ENCODE measurements at regions of chr18 and their contacts with region 1.

Region 1: DNA sequence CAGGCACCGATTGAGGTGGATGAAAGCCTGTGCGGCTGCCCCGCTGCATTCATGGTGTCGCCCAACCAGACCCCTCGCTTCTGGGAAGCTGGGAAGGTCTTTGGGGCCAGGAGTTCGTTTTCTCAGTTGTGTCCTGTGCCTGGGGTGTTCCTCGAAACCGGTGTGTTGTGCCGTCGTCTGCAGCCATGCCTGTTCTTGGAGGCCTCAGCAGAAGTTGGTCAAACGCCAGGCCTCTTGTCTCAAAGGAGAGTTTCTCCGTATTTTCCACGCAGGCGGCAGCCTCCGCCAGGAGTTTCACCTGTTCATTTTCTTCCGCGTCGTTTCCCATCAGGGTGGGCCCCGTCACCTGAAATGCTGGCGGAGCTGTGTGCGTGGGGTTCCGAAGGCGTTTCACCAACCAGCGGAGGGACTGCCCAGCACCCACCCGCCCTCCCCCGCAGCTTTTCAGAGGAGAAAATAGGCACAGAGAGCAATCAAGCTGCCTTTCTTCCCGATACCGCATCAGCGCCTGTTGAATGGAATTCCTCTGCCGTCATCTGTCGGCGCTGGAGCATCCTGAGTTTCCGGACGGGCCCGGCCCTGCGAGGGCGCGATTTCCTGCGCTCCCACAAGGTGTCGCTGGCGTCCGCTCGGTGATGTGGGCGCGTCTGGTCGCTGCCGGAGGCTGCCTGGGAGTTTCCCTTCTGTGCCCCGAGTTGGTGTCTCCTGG is 17.0 kb upstream of the NFATC1 start:
- DNase-seq: peak; percentile 87
- ATAC-seq: peak; percentile 95
- H3K4me3 Mint-ChIP-seq: no peak overlapping the region
- H3K27ac Mint-ChIP-seq: no peak overlapping the region
- H3K4me1 Mint-ChIP-seq: peaks cover 8% of the 10 kb centered on the region
- H3K27me3 Mint-ChIP-seq: no peaks in the 10 kb centered on the region
- CTCF ChIP-seq: peak; percentile 92

Region 2: DNA sequence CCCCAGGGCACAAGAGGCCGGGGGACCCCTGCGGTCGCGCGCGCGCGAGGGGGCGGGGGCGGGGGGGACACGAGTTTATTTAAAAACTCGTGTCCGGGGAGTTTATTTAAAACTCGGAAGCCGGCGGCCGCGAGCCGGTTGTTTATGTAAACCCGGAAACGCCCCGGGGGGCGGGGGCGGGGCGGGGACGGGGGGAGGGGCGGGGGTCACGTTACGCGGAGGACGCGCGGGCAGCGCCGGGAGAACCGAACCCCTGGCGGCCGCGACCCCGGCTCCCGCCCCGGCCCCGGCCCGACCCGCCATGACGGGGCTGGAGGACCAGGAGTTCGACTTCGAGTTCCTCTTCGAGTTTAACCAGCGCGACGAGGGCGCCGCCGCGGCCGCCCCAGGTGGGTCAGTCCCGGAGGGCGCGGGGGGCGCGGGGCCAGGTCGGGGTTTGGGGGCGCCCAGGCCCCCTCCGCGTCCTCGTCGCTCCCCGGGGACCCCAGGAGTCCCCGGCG is 21.4 kb after region 1 on chr18:
- CTCF ChIA-PET with region 1: interaction called, 44 read pairs
- POLR2A ChIA-PET with region 1: no interaction called
- intact Hi-C with region 1: no loop called
- DNase-seq: peak; percentile 78
- ATAC-seq: no peak
- H3K4me3 Mint-ChIP-seq: peak overlapping the region; percentile 94
- H3K27ac Mint-ChIP-seq: no peak overlapping the region
- H3K4me1 Mint-ChIP-seq: peaks cover 42% of the 10 kb centered on the region
- H3K27me3 Mint-ChIP-seq: no peaks in the 10 kb centered on the region
- CTCF ChIP-seq: no peak

Region 3: GRCh38 chr18:79523736-79524180 is 145.1 kb after region 1 on chr18:
- CTCF ChIA-PET with region 1: interaction called, 88 read pairs
- POLR2A ChIA-PET with region 1: interaction called, 3 read pairs
- intact Hi-C with region 1: loop called (anchors 2 kb)
- DNase-seq: peak; percentile 96
- ATAC-seq: peak; percentile 50
- H3K4me3 Mint-ChIP-seq: peak overlapping the region; percentile 78
- H3K27ac Mint-ChIP-seq: peak overlapping the region; percentile 100
- H3K4me1 Mint-ChIP-seq: peaks cover 60% of the 10 kb centered on the region
- H3K27me3 Mint-ChIP-seq: no peaks in the 10 kb centered on the region
- CTCF ChIP-seq: no peak

Region 4: DNA sequence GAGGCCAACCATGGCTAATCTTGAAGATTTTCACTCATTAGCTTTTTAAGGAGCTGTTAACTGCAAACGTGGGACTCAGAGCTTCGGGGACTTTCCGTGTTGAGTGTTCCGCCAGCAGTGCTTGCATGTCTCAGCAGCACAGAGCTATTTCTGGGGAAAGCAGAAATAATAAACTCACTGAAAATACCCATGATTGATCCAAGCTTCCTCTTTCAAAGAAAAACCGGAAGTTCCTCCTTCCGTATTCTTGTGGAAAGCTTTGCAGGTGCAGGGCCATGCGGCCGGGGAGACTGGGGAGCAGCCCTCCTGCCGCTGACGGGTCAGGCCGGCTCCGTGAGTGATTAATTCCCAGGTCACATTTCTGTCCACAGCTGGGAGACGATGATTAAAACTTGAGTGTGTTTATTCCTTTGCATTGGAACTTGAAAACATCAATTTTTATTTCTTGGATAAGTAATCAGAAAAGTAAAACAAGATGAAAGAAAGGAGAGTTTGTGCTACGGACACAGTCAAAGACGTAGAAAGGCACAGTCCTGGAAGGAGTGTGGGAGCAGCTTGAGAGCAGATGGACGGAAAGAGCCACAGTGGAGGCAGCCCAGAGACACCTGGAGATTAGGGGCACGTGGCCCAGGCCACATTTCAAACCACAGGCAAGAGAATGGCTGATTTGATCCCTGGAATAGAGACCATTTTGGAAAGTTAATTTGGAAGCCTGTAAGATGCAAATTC is 246.7 kb after region 1 on chr18:
- CTCF ChIA-PET with region 1: interaction called, 18 read pairs
- POLR2A ChIA-PET with region 1: interaction called, 4 read pairs
- intact Hi-C with region 1: no loop called
- DNase-seq: peak; percentile 23
- ATAC-seq: peak; percentile 47
- H3K4me3 Mint-ChIP-seq: no peak overlapping the region
- H3K27ac Mint-ChIP-seq: no peak overlapping the region
- H3K4me1 Mint-ChIP-seq: peaks cover 11% of the 10 kb centered on the region
- H3K27me3 Mint-ChIP-seq: peaks cover 15% of the 10 kb centered on the region
- CTCF ChIP-seq: no peak

Region 5: GRCh38 chr18:79657342-79657985 is 278.8 kb after region 1 on chr18:
- CTCF ChIA-PET with region 1: interaction called, 20 read pairs
- POLR2A ChIA-PET with region 1: no interaction called
- intact Hi-C with region 1: no loop called
- DNase-seq: no peak
- ATAC-seq: no peak
- H3K4me3 Mint-ChIP-seq: no peak overlapping the region
- H3K27ac Mint-ChIP-seq: no peak overlapping the region
- H3K4me1 Mint-ChIP-seq: no peaks in the 10 kb centered on the region
- H3K27me3 Mint-ChIP-seq: peaks cover 6% of the 10 kb centered on the region
- CTCF ChIP-seq: no peak

Measured in activated CD8-positive, alpha-beta T cell treated with anti-CD3 and anti-CD28 coated beads for 36 hours (primary cell).